AG04449 (cell line): ENCODE measurements at regions of chr6 and their contacts with region 1.

Region 1: DNA sequence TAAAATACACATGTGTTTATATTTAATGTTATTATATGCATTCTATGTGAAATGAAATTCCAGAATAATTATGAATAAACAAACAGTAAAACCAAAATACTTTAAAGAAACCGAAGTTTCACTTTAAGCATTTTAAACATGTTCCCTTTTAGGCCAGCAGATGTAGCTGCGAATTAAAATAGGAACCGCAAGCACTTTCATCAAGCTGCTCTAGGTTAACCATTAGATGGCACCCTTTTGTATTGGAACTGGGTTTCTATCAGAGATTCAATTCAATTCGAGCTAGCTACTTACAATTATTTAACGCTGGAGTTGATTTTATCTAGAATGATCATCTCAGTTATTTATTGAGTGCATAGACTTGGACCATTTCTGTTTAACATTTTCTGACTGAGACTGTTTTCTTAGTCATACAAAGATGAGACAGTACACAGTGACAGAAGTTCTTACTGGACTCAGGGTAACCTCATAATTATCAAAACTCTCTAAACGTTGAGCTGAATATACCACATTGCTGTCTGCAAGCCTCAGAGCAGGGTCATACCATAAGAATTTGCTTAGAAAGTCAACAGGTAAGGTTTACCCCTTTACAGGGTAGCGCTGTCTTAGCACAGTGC is 8.5 kb downstream of the TMEM242 start:
- DNase-seq: no peak
- H3K4me3 ChIP-seq: no peak overlapping the region
- CTCF ChIP-seq: peak; percentile 68

Region 2: DNA sequence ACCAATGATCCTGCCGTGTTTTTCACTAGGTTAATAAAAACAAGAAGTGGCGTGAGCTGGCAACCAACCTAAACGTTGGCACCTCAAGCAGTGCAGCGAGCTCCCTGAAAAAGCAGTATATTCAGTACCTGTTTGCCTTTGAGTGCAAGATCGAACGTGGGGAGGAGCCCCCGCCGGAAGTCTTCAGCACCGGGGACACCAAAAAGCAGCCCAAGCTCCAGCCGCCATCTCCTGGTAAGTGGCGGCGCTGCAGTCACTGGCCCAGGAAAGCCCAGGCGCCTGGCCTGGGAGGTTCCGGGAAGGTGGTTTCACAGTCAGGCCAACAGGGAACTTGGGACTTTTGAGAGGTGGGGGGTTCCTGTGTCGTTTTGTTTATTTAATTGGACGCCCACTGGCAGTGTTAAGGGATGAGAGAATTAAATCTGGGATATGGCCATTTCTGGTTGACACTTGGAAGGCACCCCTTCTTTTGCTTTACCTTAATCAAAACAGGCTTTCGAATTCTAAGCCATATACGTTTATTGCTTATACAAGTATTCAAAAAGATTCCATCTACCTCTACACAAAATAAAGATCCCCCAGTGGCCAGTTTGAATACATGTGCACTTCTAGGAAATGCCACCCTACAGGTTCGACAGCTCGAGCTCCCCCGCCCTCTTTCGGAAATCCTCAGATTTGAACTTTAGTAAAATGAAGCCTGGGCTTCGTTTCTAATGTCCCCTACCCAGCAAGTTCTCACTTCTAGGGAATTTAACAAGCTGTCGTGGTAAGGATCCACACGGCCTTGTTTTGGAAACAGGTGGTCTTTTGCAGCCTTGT is 130.4 kb before region 1 on chr6:
- CTCF ChIA-PET with region 1: no interaction called
- POLR2A ChIA-PET with region 1: no interaction called
- DNase-seq: no peak
- H3K4me3 ChIP-seq: no peak overlapping the region
- CTCF ChIP-seq: peak; percentile 95

Region 3: DNA sequence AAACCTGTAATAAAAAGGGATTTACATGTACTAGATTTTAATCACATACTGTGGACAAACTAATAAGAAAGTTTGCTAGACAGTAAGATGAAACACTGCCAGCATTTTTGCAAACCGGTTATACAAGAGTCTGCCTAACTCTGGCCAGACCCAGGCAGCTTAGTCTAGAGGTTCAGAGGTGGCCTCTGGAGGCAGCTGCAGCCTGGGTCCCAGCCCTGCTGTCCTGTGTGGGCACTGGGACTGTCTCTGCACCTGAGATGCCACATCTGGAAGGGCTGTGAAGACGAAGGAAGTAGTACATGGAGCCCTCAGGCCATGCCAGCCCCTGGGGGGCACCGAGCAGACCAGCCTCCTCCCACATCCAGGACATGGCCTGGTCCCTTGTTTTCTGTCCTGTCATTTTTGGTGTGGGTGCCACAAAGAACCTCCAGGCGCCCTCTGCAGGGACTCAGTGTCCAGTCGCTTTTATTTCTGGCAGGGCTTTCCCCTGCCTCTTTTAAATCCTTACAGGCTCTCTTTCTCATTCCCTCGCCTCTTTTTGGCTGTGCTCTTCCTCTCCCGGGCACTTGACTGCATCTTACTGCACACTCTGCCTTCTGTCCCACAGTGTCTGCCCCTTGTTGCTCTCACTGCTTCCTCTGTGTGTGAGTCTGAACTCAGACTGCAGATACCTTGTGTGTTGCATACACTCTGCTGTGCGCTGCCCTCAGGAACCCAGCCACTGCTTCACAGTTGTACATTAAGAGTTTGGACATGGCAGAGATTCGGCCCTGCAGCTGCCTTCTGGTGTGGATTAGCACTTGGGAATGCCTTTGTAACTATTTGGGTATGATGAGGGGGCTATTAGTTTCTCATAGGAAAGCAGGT is 282.9 kb after region 1 on chr6:
- CTCF ChIA-PET with region 1: interaction called, 62 read pairs
- POLR2A ChIA-PET with region 1: no interaction called
- DNase-seq: no peak
- H3K4me3 ChIP-seq: no peak overlapping the region
- CTCF ChIP-seq: peak; percentile 49

Region 4: DNA sequence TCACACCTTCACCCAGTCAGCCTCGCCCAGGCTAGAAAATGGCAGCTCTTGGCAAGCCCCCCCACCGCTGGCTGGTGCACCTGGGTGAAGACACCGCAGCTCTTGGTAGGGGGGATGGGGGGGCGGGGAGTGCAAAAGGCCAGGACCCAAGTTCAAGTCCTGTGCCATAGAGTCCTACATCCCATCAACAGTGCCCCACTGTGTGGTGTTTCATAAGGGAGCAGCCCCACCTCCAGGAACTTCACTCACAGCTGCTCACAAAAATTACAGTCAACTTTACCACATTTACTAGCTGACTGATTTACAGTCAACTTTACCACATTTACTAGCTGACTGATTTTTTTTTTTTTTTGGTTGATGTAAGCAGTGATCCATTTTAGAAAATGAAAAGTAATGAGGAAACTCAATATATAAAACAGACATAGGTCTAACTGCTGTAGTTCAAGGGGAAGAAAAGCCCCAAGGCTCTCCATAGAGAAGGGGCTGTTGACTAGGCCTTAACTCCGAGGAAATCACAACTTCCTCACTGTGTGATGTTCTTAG is 299.3 kb after region 1 on chr6:
- CTCF ChIA-PET with region 1: interaction called, 39 read pairs
- POLR2A ChIA-PET with region 1: no interaction called
- DNase-seq: no peak
- H3K4me3 ChIP-seq: no peak overlapping the region
- CTCF ChIP-seq: no peak